ENCODE measurements at regions of chr13 and their contacts with region 1.

Region 1: DNA sequence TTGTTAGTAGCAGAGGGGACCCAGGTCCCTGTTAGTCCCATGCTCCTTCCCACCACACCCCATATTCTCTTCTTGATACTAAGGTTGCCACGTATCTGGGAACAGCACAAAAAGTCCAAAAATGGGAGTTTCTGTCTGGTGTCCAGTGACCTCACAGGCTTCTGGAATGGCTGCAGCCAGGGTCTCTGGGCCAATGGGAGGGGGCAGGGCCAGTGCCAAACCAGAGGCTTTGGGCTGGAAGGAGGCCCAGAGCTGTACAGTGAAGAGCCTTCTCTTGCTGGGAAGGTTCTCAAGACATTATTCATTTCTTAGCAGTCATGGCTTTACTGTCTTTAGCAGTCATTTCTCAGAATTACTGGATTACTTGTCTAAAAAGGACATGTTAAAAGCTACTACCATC is 119.2 kb downstream of the FRY start:
- DNase-seq: peak; percentile 74 to 83 (median 75)
- ATAC-seq: peak; percentile 86 to 94 (median 92)
- H3K4me3 ChIP-seq: no peak overlapping the region
- H3K27ac ChIP-seq: peak overlapping the region; percentile 58 to 90 (median 78)
- H3K4me1 ChIP-seq: peaks cover 0 to 47% (median 19%) of the 10 kb centered on the region in 12 donors
- H3K27me3 ChIP-seq: no peaks in the 10 kb centered on the region
- CTCF ChIP-seq: no peak
- POLR2A ChIP-seq: no peak

Region 2: DNA sequence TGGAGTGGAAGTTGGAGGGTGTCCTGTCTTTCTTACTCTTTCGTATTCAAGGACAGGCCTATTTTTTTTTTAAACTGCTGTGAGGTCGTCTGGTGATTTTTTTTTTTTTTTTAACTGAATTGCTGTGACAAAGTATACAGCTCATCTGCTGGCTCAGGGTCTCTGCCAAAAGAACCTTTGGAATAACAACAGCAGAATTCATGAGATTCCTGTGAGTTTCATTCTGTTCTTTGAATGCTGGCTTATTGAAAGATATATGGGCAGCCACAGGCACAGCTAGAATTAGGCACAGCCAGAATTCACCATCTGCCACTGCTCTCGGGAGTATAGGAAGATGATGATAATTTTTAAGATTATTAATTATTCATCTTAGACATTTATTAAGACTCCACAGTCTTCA is 140.7 kb before region 1 on chr13:
- intact Hi-C with region 1: no loop called
- DNase-seq: no peak
- ATAC-seq: no peak
- H3K4me3 ChIP-seq: no peak overlapping the region
- H3K27ac ChIP-seq: peak overlapping the region in 2 of 12 donors; percentile 23 to 29
- H3K4me1 ChIP-seq: peaks cover 0 to 28% (median 6%) of the 10 kb centered on the region in 12 donors
- H3K27me3 ChIP-seq: no peaks in the 10 kb centered on the region
- CTCF ChIP-seq: no peak
- POLR2A ChIP-seq: no peak

Region 3: DNA sequence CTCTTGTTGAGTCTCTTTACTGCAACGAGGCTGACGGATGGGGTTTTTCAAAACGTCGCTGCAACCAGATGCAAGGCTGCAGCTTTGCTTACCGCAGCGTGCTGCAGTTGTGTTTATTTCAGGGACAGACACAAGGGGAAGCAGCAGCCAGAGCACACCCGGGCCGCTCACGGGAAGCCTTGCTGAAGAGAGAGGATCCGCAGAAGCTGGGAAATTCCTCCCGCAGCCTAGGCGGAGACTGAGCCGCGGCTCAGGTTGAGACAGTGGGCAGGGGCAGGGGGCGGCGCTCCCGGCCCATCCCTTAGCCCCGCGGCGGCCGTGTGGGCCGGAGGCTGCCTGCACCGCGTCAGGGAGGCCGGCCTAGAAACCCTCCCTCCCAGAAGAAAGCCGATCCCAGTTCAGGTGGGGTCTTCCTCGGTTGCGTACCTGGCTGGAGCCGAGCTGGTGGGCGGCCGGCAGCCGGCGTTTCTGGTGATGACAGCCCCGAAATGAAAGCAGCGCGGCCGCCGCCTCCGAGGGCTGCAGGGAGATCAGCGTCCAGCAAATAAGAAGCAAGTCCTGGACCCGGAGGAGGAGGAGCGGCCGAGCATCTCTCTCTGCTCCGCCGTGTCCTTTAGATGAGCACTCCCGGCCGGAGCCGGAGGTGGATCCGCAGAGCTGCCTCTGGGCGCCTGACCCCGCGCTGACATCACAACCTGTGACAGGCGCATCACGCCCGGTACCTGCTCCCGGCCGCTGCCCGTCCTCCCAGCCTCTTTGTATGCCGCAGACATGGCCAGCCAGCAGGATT is 119.6 kb before region 1 on chr13 and contains the start of gene FRY:
- intact Hi-C with region 1: loop called in 1 of 10 experiments (anchors 10 kb)
- DNase-seq: peak; percentile 65 to 84 (median 74)
- ATAC-seq: peak; percentile 70 to 88 (median 85)
- H3K4me3 ChIP-seq: peak within 1 kb of the TSS; percentile 32 to 86 (median 64)
- H3K27ac ChIP-seq: peak within 1 kb of the TSS in 11 of 12 donors; percentile 52 to 90 (median 76)
- H3K4me1 ChIP-seq: peaks cover 0 to 32% (median 14%) of the 10 kb centered on the region in 12 donors
- H3K27me3 ChIP-seq: no peaks in the 10 kb centered on the region
- CTCF ChIP-seq: peak in 3 of 12 donors; percentile 13 to 29 (median 29)
- POLR2A ChIP-seq: peak in 1 of 2 donors; percentile 30
- total RNA-seq, gene FRY: 108 to 237 (median 168) TPM

Region 4: GRCh38 chr13:32211813-32212212 is 61.0 kb after region 1 on chr13:
- intact Hi-C with region 1: loop called in 1 of 10 experiments (anchors 10 kb)
- DNase-seq: peak in 3 of 5 donors; percentile 31 to 43 (median 38)
- ATAC-seq: peak; percentile 72 to 85 (median 83)
- H3K4me3 ChIP-seq: no peak overlapping the region
- H3K27ac ChIP-seq: peak overlapping the region in 11 of 12 donors; percentile 39 to 79 (median 64)
- H3K4me1 ChIP-seq: peaks cover 0 to 43% (median 19%) of the 10 kb centered on the region in 12 donors
- H3K27me3 ChIP-seq: no peaks in the 10 kb centered on the region
- CTCF ChIP-seq: no peak
- POLR2A ChIP-seq: no peak